Activated CD8-positive, alpha-beta T cell treated with anti-CD3 and anti-CD28 coated beads, Interleukin-2, amount 10 ng/mL, durations not matched to agents 7 days and 5 days (primary cell): ENCODE measurements at regions of chr11 and their contacts with region 1.

Region 1: DNA sequence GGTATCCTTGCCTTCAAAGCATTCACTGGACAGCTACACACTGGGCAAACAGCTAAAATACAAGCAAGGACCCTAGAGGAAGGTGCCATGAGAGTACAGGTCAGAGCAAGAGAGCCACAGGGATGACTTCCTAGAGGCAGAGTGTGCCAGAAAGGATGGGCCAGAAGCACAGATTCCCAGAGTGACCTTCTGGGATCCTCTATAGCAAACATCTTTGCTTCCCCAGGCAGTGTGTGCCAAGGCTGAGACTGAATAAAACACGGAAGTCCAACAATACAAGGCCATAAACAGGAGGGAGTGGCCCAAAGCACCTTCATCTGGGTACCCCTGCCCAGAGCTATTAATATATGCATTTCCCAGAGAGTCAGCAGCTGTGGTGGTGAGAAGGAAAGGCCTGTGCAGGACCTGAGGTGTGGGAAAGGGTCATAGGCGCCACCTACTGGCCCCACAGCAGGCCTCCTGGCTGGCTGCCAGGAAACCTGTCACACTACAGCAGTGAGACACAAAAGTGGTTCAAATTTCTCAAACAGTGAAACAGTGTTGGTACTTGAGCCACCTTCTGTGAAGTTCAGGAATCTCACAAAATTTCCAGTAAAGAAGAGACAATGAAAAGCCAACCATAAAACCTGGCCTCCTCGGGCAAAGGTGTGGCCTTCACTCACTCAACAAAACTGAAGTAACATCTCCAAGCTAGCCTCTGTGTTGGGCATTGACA is 20.3 kb downstream of the CLPB start:
- DNase-seq: peak; percentile 85
- ATAC-seq: peak; percentile 86
- H3K4me3 Mint-ChIP-seq: no peak overlapping the region
- H3K27ac Mint-ChIP-seq: no peak overlapping the region
- H3K4me1 Mint-ChIP-seq: peaks cover 32% of the 10 kb centered on the region
- H3K27me3 Mint-ChIP-seq: no peaks in the 10 kb centered on the region

Region 2: DNA sequence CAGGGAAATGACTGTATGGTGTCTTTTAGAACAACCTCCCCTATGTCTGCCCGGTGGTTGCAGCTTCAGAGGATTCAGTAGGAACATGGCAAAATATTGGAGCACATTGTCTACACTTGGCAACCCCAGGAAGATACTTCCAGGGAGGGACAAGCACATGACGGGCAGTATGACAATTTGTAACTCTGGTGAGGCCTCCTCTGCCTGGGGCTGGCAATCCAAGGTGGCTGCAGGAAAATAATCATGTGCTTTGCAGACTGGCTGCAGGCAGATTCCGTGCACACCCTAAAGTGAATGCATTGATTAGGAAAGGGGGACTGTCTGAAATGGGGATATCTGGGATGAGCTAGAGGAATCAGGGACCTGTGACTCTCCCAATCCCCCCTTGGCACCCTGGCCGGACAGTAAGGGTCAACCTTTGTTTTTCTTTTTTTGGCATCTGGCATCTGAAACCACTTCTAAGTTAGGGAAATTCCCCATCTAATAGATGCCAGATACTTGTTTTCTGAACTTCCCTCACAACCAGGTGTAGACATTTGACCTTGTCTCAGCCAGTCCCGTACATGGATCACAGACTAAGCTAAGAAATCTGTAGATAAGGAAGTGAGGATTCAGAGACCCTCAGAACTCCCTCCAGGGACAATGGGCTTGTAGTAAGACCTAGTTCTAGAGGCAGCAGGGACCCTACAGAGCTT is 159.6 kb before region 1 on chr11:
- CTCF ChIA-PET with region 1: interaction called, 11 read pairs
- POLR2A ChIA-PET with region 1: no interaction called
- DNase-seq: no peak
- ATAC-seq: no peak
- H3K4me3 Mint-ChIP-seq: no peak overlapping the region
- H3K27ac Mint-ChIP-seq: no peak overlapping the region
- H3K4me1 Mint-ChIP-seq: no peaks in the 10 kb centered on the region
- H3K27me3 Mint-ChIP-seq: peaks cover 20% of the 10 kb centered on the region

Region 3: GRCh38 chr11:72328366-72329224 is 85.5 kb before region 1 on chr11:
- CTCF ChIA-PET with region 1: interaction called, 33 read pairs
- POLR2A ChIA-PET with region 1: no interaction called
- DNase-seq: peak; percentile 53
- ATAC-seq: peak; percentile 34
- H3K4me3 Mint-ChIP-seq: no peak overlapping the region
- H3K27ac Mint-ChIP-seq: peak overlapping the region; percentile 62
- H3K4me1 Mint-ChIP-seq: peaks cover 68% of the 10 kb centered on the region
- H3K27me3 Mint-ChIP-seq: no peaks in the 10 kb centered on the region

Region 4: GRCh38 chr11:72338741-72339140 is 75.3 kb before region 1 on chr11:
- CTCF ChIA-PET with region 1: interaction called, 33 read pairs
- POLR2A ChIA-PET with region 1: no interaction called
- DNase-seq: no peak
- ATAC-seq: no peak
- H3K4me3 Mint-ChIP-seq: no peak overlapping the region
- H3K27ac Mint-ChIP-seq: no peak overlapping the region
- H3K4me1 Mint-ChIP-seq: peaks cover 12% of the 10 kb centered on the region
- H3K27me3 Mint-ChIP-seq: no peaks in the 10 kb centered on the region

Region 5: DNA sequence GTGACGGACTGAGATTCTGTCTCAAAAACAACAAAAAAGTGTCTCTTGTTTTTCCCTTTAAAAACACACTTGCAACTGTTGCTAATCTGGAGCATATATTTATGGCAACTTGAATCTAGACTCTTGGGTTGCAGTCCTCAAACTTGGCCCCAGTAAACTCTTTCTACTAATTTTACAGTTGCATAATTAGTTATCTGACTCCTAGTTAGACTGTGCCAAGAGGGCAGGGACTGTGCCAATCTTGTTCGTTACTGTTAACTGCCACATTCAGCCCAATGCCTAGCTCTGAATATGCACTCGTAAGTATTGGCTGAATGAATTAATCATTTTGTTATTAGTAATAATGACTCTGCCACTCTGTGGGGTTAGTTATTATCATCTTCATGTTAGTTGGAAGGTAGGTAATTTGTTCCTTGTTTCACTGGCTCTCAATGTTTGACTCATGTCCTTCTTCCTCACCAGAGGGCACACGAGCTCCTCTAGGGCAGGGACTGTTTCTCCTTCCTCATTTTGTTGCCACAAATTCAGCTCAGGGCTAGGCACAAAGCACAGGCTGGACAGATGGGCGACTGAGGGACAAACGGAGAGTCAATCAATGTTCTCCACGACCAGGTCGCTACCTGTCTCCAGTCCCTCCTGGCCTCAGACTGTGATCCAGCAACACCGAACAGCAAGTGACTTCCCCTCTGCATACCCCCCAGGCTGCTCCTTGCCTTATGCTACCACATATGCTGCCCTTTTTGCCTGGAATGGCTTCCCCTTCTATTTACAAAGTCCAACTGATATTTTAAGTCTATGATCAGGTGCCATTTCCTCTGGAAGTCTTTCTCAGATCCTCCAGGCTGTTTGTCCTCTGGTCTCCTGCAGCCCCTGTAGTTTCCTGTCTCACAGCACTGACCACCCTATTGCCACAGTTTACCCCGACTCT is 11.2 kb after region 1 on chr11:
- CTCF ChIA-PET with region 1: interaction called, 163 read pairs
- POLR2A ChIA-PET with region 1: interaction called, 3 read pairs
- DNase-seq: no peak
- ATAC-seq: no peak
- H3K4me3 Mint-ChIP-seq: no peak overlapping the region
- H3K27ac Mint-ChIP-seq: peak overlapping the region; percentile 33
- H3K4me1 Mint-ChIP-seq: peaks cover 20% of the 10 kb centered on the region
- H3K27me3 Mint-ChIP-seq: no peaks in the 10 kb centered on the region